ENCODE measurements at regions of chr5 and their contacts with region 1.

Region 1: GRCh38 chr5:142063878-142064331 is 44.7 kb upstream of the NDFIP1 start:
- DNase-seq: peak; percentile 75 to 88 (median 79)
- ATAC-seq: peak; percentile 82 to 90 (median 84)
- H3K4me3 ChIP-seq: peak overlapping the region in 10 of 12 donors; percentile 15 to 51 (median 35)
- H3K27ac ChIP-seq: peak overlapping the region; percentile 14 to 86 (median 66)
- H3K4me1 ChIP-seq: peaks cover 0 to 31% (median 14%) of the 10 kb centered on the region in 12 donors
- H3K27me3 ChIP-seq: no peaks in the 10 kb centered on the region
- CTCF ChIP-seq: no peak
- POLR2A ChIP-seq: no peak

Region 2: GRCh38 chr5:142012792-142013388 is 51.0 kb before region 1 on chr5 and contains the start of gene GNPDA1:
- intact Hi-C with region 1: loop called in 1 of 10 experiments (anchors 5 kb)
- DNase-seq: peak; percentile 85 to 90 (median 88)
- ATAC-seq: peak; percentile 74 to 94 (median 90)
- H3K4me3 ChIP-seq: peak within 1 kb of the TSS; percentile 42 to 98 (median 78)
- H3K27ac ChIP-seq: peak within 1 kb of the TSS; percentile 47 to 94 (median 85)
- H3K4me1 ChIP-seq: peaks cover 0 to 53% (median 15%) of the 10 kb centered on the region in 12 donors
- H3K27me3 ChIP-seq: no peaks in the 10 kb centered on the region
- CTCF ChIP-seq: peak in 5 of 12 donors; percentile 8 to 39 (median 31)
- POLR2A ChIP-seq: peak in 1 of 2 donors; percentile 39
- total RNA-seq, gene GNPDA1: 14.1 to 43.0 (median 26.1) TPM

Region 3: DNA sequence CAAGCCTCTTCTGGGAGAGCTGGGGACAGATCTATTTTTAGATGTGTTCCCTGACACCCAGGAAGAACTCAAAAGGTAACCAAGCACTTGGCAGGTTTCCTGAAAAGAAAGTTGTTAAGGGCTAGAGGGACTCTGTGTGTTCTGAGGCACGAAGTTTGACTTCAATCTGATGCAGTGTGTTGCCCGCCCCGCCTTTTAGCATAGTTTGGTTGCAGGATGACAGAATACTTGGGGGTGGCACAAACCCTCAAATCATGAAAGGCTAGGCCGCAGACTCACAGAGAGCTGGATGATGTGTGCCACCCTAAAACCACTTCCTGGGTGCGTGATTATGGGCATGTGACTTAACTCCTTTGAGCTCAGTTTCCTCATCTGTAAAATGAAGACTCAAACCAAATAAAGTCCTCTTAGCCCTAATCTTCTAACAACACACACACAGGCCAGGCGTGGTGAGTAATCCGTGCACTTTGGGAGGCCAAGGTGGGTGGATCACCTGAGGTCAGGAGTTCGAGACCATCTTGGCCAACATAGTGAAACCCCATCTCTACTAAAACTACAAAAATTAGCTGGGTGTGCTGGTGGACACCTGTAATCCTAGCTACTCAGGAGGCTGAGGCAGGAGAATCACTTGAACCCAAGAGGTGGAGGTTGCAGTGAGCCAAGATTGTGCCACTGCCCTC is 31.9 kb after region 1 on chr5:
- intact Hi-C with region 1: loop called in 1 of 10 experiments (anchors 5 kb)
- DNase-seq: peak in 1 of 5 donors; percentile 38
- ATAC-seq: peak; percentile 89 to 91 (median 90)
- H3K4me3 ChIP-seq: no peak overlapping the region
- H3K27ac ChIP-seq: peak overlapping the region in 11 of 12 donors; percentile 6 to 86 (median 75)
- H3K4me1 ChIP-seq: peaks cover 0 to 22% (median 15%) of the 10 kb centered on the region in 12 donors
- H3K27me3 ChIP-seq: no peaks in the 10 kb centered on the region
- CTCF ChIP-seq: no peak
- POLR2A ChIP-seq: no peak

Region 4: GRCh38 chr5:142748568-142749249 is 684.8 kb after region 1 on chr5:
- intact Hi-C with region 1: no loop called
- DNase-seq: peak in 3 of 5 donors; percentile 32 to 39 (median 35)
- ATAC-seq: peak in 3 of 4 donors; percentile 29 to 32 (median 30)
- H3K4me3 ChIP-seq: no peak overlapping the region
- H3K27ac ChIP-seq: no peak overlapping the region
- H3K4me1 ChIP-seq: peaks cover 8 to 79% (median 43%) of the 10 kb centered on the region in 12 donors
- H3K27me3 ChIP-seq: no peaks in the 10 kb centered on the region
- CTCF ChIP-seq: peak; percentile 31 to 70 (median 56)
- POLR2A ChIP-seq: no peak

Region 5: DNA sequence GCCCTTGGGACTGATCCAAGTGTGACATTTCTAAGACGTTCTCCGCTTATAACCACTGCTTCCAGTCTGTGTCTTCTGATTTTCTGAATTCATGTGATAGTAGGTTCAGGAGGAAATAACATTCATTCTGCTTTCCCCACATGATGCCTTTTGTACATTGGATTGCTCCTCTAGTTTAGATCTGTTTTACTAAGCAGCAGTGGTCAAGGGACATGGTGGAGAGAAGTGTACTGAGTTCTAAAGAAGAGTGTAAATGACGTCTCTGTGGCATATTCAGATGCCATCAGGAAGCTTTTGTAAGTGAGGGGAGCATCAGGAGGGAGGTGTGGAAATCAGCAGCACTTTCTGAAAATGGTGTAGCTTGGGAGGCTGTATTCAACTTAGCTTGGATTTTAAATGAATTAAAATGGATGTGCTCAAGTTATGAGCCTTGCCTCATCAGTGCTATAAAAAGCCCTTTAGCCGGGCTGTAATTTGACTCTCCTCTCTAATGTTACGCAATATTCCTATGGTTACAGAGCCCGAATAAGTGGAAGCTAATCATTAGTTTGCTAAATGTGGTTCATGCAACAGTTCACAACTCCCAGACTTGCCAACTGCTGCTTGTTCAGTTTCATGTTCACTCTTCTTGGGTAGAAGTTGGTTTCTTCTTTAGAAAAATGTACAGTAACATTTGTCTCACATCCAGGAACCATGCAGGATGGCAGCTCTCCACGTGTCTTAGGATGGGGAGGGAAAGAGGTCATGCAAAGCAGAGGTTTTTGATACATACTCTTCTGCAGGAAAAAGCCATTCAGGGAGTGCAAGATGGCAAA is 987.5 kb after region 1 on chr5:
- intact Hi-C with region 1: no loop called
- DNase-seq: peak in 2 of 5 donors; percentile 38 to 45
- ATAC-seq: peak; percentile 94 to 97 (median 96)
- H3K4me3 ChIP-seq: peak overlapping the region in 1 of 12 donors; percentile 1
- H3K27ac ChIP-seq: peak overlapping the region; percentile 54 to 89 (median 79)
- H3K4me1 ChIP-seq: peaks cover 0 to 50% (median 30%) of the 10 kb centered on the region in 12 donors
- H3K27me3 ChIP-seq: no peaks in the 10 kb centered on the region
- CTCF ChIP-seq: no peak
- POLR2A ChIP-seq: no peak

Measured in heart left ventricle (tissue), 16 donors.